ENCODE measurements at regions of chr1 and their contacts with region 1.

Region 1: GRCh38 chr1:150010393-150011115 is at the start of gene OTUD7B:
- DNase-seq: peak; percentile 86 to 94 (median 90)
- H3K4me3 ChIP-seq: peak within 1 kb of the TSS; percentile 64
- H3K27ac ChIP-seq: peak within 1 kb of the TSS; percentile 80 to 93
- H3K4me1 ChIP-seq: peaks cover 9% of the 10 kb centered on the region
- H3K27me3 ChIP-seq: no peaks in the 10 kb centered on the region
- CTCF ChIP-seq: peak in 1 of 3 donors; percentile 23
- EP300 ChIP-seq: no peak
- POLR2A ChIP-seq: peak; percentile 78
- total RNA-seq, gene OTUD7B: 16.5 to 40.1 (median 34.1) TPM

Region 2: DNA sequence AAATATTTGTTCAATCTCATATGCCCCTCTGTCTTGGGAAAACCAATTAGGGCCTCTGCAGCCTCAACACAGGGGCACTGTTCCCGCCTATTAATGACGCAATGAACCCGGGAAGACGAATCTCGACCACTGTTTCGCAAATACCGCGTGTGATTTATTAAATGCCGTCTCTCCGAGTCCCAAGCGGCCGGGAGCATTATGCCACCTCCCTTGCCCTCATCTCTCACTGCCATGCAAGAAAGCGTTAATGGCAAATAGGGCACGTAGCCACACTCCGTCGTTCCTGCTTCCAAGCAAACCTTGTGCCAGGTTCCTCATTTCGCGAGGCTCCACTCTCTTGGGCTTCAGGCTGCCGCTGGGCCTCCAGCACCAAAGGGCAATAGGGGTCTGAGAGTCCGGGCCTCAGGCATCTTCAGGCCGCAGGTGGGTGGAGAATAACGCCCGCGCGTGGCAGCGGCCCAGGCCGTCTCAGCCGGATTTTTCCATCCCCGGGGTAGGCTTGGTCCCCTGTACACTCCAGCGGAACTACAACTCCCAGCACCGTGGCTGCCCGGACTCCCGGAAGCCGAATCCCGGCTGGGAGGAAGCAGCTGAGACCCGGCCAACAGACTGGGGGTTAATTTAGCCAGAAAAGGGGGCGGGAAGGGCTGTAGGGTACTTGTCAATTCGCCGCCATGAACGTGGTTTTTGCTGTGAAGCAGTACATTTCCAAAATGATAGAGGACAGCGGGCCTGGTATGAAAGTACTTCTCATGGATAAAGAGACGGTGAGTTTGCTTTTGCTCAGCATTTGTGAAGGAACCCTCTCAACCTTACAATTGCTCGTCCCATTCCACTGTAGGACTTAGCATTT is 56.9 kb after region 1 on chr1 and contains the start of gene VPS45:
- intact Hi-C with region 1: loop called in 1 of 4 experiments (anchors 2 kb)
- DNase-seq: peak; percentile 87 to 91 (median 88)
- H3K4me3 ChIP-seq: peak within 1 kb of the TSS; percentile 64
- H3K27ac ChIP-seq: peak within 1 kb of the TSS; percentile 89 to 97
- H3K4me1 ChIP-seq: peaks cover 3% of the 10 kb centered on the region
- H3K27me3 ChIP-seq: no peaks in the 10 kb centered on the region
- CTCF ChIP-seq: peak; percentile 30 to 58 (median 30)
- EP300 ChIP-seq: peak; percentile 47
- POLR2A ChIP-seq: peak; percentile 20
- total RNA-seq, gene VPS45: 19.1 to 39.1 (median 32.7) TPM

Measured in ovary (tissue), 10 donors.